ENCODE measurements at regions of chr2 and their contacts with region 1.

Region 1: DNA sequence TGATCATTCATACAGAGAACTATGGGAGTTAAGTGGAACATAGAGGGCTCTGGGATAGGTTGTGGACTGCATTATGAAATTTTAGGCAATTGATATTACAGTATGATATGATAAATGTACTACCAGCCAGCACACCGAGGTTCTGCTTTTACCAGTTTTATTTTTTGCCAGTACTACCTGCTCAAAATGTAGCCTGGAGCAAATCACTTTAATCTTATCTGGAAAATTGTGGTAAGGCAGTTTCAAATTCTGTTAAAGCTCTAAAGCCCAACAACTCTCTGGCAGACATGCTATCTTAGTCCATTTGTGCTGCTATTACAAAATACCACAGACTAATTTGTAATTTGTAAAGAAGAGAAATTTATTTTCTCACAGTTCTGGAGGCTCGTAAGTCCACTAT is 474.9 kb upstream of the CWC22 start:
- DNase-seq: no peak
- ATAC-seq: no peak
- H3K4me3 ChIP-seq: no peak overlapping the region
- H3K27ac ChIP-seq: no peak overlapping the region
- H3K4me1 ChIP-seq: no peaks in the 10 kb centered on the region
- H3K27me3 ChIP-seq: no peaks in the 10 kb centered on the region
- CTCF ChIP-seq: no peak
- EP300 ChIP-seq: no peak
- POLR2A ChIP-seq: no peak
- RAD21 ChIP-seq: no peak

Region 2: GRCh38 chr2:180240774-180241173 is 241.2 kb before region 1 on chr2:
- CTCF ChIA-PET with region 1: no interaction called
- POLR2A ChIA-PET with region 1: no interaction called
- in situ Hi-C with region 1: no loop called
- intact Hi-C with region 1: loop called (anchors 1 kb)
- DNase-seq: no peak
- ATAC-seq: no peak
- H3K4me3 ChIP-seq: no peak overlapping the region
- H3K27ac ChIP-seq: no peak overlapping the region
- H3K4me1 ChIP-seq: no peaks in the 10 kb centered on the region
- H3K27me3 ChIP-seq: no peaks in the 10 kb centered on the region
- CTCF ChIP-seq: peak; percentile 27
- EP300 ChIP-seq: no peak
- POLR2A ChIP-seq: no peak
- RAD21 ChIP-seq: no peak

Region 3: GRCh38 chr2:180742809-180743208 is 260.8 kb after region 1 on chr2:
- CTCF ChIA-PET with region 1: no interaction called
- POLR2A ChIA-PET with region 1: no interaction called
- in situ Hi-C with region 1: no loop called
- intact Hi-C with region 1: no loop called
- DNase-seq: peak; percentile 34
- ATAC-seq: peak; percentile 88
- H3K4me3 ChIP-seq: no peak overlapping the region
- H3K27ac ChIP-seq: no peak overlapping the region
- H3K4me1 ChIP-seq: peaks cover 14% of the 10 kb centered on the region
- H3K27me3 ChIP-seq: no peaks in the 10 kb centered on the region
- CTCF ChIP-seq: no peak
- EP300 ChIP-seq: peak in 1 of 2 experiments; percentile 42; a peak in 1 of 4 replicates
- POLR2A ChIP-seq: no peak
- RAD21 ChIP-seq: no peak